Aorta (tissue), 5 donors: ENCODE measurements at regions of chr13 and their contacts with region 1.

Region 1: GRCh38 chr13:41652727-41653361 is 195.5 kb downstream of the RGCC start:
- DNase-seq: no peak
- ATAC-seq: no peak
- H3K4me3 ChIP-seq: no peak overlapping the region
- H3K27ac ChIP-seq: no peak overlapping the region
- H3K4me1 ChIP-seq: no peaks in the 10 kb centered on the region
- H3K27me3 ChIP-seq: no peaks in the 10 kb centered on the region

Region 2: DNA sequence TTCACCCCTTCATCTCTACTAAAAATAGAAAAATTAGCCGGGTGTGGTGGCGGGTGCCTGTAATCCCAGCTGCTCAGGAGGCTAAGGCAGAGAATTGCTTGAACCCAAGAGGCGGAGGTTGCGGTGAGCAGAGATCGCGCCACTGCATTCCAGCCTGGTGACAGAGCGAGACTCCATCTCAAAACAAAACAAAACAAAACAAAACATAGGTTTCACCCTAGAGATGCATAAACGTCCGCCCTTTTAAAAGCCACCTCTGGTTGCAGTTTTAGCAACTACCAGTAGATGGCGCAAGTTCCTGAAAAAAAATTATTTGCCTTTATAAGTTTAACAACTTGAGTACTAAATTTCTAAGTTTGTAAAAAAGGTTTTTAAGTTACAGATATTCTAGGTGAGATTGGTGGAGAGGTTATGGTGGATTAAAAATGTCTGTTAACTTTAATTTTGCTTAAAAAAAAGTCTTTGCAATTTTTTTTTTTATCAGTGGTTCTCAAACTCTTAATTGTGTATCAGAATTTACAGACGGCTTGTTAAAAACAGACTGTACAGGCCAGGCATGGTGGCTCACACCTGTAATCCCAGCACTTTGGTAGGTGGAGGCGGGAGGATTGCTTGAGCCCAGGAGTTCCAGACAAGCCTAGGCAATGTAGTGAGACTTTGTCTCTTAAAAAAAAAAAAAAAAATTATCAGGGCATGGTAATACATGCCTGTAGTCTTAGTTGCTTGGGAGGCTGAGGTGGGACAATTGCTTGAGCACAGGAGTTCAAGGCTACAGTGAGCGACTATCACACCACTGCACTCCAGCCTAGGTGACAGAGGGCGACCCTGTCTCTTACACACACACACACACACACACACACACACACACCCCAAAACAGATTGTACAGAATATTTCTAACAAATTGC is 299.7 kb before region 1 on chr13:
- intact Hi-C with region 1: loop called (anchors 5 kb)
- DNase-seq: no peak
- ATAC-seq: peak; percentile 62
- H3K4me3 ChIP-seq: no peak overlapping the region
- H3K27ac ChIP-seq: no peak overlapping the region
- H3K4me1 ChIP-seq: no peaks in the 10 kb centered on the region
- H3K27me3 ChIP-seq: no peaks in the 10 kb centered on the region

Region 3: DNA sequence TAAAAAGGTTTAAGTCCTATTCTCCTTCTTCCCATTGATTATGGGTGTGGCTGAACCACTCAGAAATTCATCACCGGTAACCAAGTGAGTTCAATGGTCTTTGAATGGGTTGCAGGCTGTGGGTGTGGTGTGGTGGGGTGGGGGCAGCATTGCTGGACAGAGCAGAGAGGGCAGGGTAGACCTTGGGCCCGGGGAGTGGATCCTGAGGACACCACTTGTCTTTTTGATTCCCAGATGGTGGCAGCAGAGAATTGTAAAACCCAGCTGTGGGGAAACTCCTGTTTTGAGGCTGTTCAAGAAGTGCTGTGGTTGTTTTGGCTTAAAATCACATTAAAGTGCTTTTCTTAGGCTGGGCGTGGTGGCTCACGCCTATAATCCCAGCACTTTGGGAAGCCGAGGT is 241.3 kb before region 1 on chr13:
- intact Hi-C with region 1: loop called in 1 of 2 experiments (anchors 5 kb)
- DNase-seq: no peak
- ATAC-seq: peak; percentile 56
- H3K4me3 ChIP-seq: no peak overlapping the region
- H3K27ac ChIP-seq: no peak overlapping the region
- H3K4me1 ChIP-seq: no peaks in the 10 kb centered on the region
- H3K27me3 ChIP-seq: no peaks in the 10 kb centered on the region

Region 4: GRCh38 chr13:41456768-41457588 is 195.9 kb before region 1 on chr13 and contains the start of gene RGCC:
- intact Hi-C with region 1: loop called (anchors 5 to 10 kb)
- DNase-seq: peak; percentile 87 to 95
- ATAC-seq: peak; percentile 86
- H3K4me3 ChIP-seq: peak within 1 kb of the TSS; percentile 32 to 74
- H3K27ac ChIP-seq: no peak within 1 kb of the TSS
- H3K4me1 ChIP-seq: peaks cover 0 to 2% of the 10 kb centered on the region in 2 donors
- H3K27me3 ChIP-seq: no peaks in the 10 kb centered on the region
- total RNA-seq, gene RGCC: 19.3 to 66.2 TPM

Region 5: DNA sequence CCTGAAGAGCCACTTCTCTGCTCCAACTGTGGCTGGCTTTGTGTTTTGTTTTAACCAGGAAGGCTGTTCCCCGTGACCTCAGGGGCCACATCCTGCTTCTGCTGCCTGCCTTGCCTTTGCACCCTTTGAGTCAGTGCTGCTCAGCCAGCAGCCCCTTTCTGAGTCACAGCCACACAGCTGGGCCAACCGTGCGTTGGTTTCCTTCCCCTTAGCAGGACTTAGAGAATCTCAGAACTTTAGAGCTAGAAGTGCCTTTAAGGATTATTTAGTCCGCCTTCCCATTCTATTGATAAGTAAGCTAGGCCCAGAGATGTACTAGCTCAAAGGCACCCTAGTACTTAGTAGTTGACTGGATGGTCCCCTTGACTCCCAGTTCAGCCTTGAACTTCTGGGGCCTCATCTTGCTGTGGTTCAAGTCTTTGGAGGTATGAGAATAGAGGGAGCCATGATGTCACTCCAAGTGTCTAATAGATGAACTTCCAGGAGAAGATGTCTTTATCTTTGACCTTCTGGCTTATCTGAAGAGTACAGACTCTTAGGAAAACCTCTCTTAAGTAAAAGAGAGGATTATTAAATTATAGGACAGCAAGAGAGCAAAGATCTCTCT is 187.5 kb before region 1 on chr13:
- intact Hi-C with region 1: loop called in 1 of 2 experiments (anchors 10 kb)
- DNase-seq: peak in 1 of 2 donors; percentile 90
- ATAC-seq: peak; percentile 61
- H3K4me3 ChIP-seq: no peak overlapping the region
- H3K27ac ChIP-seq: peak overlapping the region in 1 of 2 donors; percentile 71
- H3K4me1 ChIP-seq: peaks cover 0 to 3% of the 10 kb centered on the region in 2 donors
- H3K27me3 ChIP-seq: no peaks in the 10 kb centered on the region

Region 6: GRCh38 chr13:41492404-41493260 is 160.2 kb before region 1 on chr13:
- intact Hi-C with region 1: loop called in 1 of 2 experiments (anchors 10 kb)
- DNase-seq: no peak
- ATAC-seq: no peak
- H3K4me3 ChIP-seq: no peak overlapping the region
- H3K27ac ChIP-seq: no peak overlapping the region
- H3K4me1 ChIP-seq: peaks cover 4% of the 10 kb centered on the region in 2 donors
- H3K27me3 ChIP-seq: no peaks in the 10 kb centered on the region

Region 7: DNA sequence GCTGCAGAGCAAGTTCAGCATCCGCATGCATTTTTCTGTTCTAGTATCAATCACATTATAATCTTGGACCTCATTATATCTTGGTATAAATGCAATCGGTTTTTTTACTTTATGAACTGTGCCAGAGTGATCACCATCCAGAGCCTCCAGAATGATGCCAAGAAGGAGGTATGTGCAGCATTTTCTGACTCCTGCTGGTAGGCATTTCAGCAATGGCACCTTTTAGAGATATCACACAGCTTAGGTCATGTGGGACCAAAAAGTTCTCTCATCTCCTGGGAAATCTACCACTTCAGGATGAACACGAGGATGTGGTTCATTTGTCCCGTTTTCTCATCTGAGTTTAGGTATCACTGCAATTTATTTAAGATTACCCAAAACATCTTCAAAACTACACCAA is 87.6 kb after region 1 on chr13:
- intact Hi-C with region 1: no loop called
- DNase-seq: no peak
- ATAC-seq: no peak
- H3K4me3 ChIP-seq: no peak overlapping the region
- H3K27ac ChIP-seq: no peak overlapping the region
- H3K4me1 ChIP-seq: peaks cover 0 to 1% of the 10 kb centered on the region in 2 donors
- H3K27me3 ChIP-seq: no peaks in the 10 kb centered on the region